AG04449 (cell line): ENCODE measurements at regions of chr13 and their contacts with region 1.

Region 1: GRCh38 chr13:102141625-102142472 is 260.0 kb downstream of the FGF14 start:
- DNase-seq: no peak
- H3K4me3 ChIP-seq: no peak overlapping the region
- CTCF ChIP-seq: peak; percentile 47

Region 2: DNA sequence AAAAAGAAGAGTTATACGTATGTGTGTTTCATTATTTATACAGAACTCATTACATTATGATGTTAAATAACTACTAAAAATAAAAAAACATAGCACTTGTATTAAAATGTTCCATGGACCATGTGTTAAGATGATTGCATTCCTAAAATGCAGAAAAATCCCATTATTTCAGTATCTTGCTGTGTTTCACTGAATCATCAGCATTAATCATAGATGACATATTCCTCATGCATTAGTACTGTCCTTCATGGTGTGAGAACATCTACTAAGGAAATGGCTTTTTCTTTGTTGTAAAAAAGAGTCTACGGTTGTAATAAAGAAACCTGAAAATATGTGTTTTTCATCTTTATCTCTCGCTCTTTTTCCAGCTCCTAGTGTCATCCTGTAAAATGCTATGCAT is 156.5 kb before region 1 on chr13:
- CTCF ChIA-PET with region 1: no interaction called
- POLR2A ChIA-PET with region 1: no interaction called
- DNase-seq: no peak
- H3K4me3 ChIP-seq: no peak overlapping the region
- CTCF ChIP-seq: no peak

Region 3: GRCh38 chr13:102555917-102556553 is 414.2 kb after region 1 on chr13:
- CTCF ChIA-PET with region 1: interaction called, 22 read pairs
- POLR2A ChIA-PET with region 1: no interaction called
- DNase-seq: no peak
- H3K4me3 ChIP-seq: no peak overlapping the region
- CTCF ChIP-seq: peak; percentile 15